Heart left ventricle (tissue), 16 donors: ENCODE measurements at regions of chr15 and their contacts with region 1.

Region 1: DNA sequence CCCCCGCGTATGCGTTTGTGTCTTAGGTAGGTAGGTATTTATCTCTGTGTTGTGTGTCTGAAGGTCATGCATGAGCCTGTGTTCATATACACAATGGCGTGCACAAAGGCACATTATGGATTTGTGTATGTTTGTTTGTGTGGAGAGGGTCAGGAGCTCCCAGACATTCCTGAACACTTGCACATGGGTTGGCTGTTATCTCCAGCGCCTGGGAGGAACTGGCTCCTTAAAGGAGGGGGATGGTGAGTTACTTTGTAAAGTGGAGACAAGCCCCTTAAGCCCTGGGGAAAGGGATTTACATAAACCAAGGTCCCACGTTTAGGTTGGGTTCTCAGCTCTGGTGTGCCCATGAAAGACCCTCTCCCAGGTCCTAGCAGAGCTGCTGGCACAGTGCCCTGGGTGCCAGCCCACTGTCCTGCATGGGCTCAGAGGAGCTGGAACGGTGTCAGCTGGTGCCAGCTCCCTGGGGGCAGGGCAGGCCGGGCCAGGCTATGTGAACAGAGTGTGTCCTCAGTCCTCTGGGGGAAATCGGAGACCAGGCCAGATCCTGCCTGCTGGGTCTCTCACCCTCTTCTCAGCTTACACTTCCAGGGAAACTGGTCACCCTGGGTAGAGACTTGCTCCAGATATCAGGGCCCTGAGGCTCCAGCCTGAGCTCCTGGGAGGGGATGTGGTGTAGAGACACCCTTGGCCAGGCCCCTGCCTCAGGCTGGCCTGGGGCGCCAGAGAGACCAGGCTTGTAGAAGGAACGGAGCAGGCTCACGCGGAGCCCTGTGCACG is 25.1 kb downstream of the SNX33 start:
- DNase-seq: no peak
- ATAC-seq: peak; percentile 24 to 36 (median 30)
- H3K4me3 ChIP-seq: peak overlapping the region in 2 of 12 donors; percentile 1 to 6
- H3K27ac ChIP-seq: peak overlapping the region; percentile 51 to 89 (median 64)
- H3K4me1 ChIP-seq: peaks cover 15 to 65% (median 28%) of the 10 kb centered on the region in 12 donors
- H3K27me3 ChIP-seq: no peaks in the 10 kb centered on the region
- CTCF ChIP-seq: no peak
- POLR2A ChIP-seq: no peak

Region 2: DNA sequence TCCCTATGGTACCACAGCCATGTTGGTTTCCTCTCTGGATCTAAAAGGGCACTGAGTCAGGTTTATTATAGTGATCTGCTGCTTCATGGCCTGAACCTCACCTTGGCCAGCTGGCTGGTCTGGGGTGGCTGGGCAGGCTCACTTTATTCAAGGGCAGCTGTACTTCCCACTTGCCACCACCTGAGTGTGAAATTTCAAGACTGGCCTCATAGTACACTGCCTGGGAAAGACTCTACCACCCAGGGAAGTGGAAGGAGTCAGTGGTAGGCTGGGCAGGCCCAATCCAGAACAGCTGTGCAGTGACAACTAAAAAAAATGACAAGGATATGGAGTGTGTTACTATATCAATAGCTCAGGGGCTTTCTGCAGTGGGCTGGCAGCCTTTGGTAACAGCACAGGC is 56.1 kb before region 1 on chr15:
- intact Hi-C with region 1: loop called in 1 of 10 experiments (anchors 10 kb)
- DNase-seq: no peak
- ATAC-seq: no peak
- H3K4me3 ChIP-seq: no peak overlapping the region
- H3K27ac ChIP-seq: no peak overlapping the region
- H3K4me1 ChIP-seq: peaks cover 0 to 26% (median 16%) of the 10 kb centered on the region in 12 donors
- H3K27me3 ChIP-seq: no peaks in the 10 kb centered on the region
- CTCF ChIP-seq: no peak
- POLR2A ChIP-seq: no peak

Region 3: GRCh38 chr15:75639709-75640482 is 32.9 kb before region 1 on chr15 and contains the start of gene IMP3:
- intact Hi-C with region 1: loop called in 3 of 10 experiments (anchors 5 kb)
- DNase-seq: peak; percentile 95 to 97 (median 95)
- ATAC-seq: peak; percentile 98 to 99 (median 98)
- H3K4me3 ChIP-seq: peak within 1 kb of the TSS; percentile 71 to 99 (median 86)
- H3K27ac ChIP-seq: peak within 1 kb of the TSS; percentile 86 to 99 (median 94)
- H3K4me1 ChIP-seq: peaks cover 9 to 44% (median 30%) of the 10 kb centered on the region in 12 donors
- H3K27me3 ChIP-seq: no peaks in the 10 kb centered on the region
- CTCF ChIP-seq: peak in 1 of 12 donors; percentile 23
- POLR2A ChIP-seq: peak; percentile 82 to 97
- total RNA-seq, gene IMP3: 37.1 to 151 (median 44.5) TPM

Region 4: DNA sequence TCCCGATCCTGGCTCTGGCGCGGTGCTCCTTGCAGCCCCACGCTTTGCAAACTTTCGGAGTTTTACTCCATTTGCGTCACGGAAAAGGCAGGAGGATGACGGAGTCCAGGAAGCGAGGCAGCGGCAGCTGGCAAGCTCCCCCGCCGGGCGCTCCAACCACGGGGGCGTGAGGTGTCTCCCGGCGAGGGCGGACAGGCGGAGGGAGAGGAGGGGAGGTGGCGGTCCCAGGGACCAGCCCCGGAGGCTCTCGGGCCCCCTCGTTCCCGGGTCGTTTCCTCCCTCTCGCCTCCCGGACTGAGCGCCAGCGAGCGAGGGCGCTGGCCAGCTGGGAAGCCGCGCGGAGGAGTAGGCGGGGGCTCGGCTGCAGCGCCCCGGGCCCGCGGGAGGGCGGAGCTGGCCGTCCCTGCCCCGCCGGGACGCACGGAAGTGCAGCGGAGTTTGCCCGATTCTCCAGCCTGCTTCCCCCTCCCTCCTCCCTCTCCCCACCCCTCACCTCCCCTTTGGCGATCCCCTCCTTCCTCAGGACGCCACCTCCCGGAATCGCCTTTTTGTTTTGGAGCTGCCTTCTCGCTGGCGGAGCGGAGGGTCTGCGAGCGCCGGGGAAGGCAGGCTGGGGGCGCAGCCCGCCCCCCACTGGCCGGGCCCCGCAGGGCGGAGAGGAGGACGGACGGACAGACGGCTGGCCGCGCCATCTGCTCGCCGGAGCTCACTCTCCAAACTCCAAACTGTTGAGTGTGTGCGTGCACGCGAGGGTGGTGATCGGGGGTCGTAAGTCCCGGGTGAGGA is 25.3 kb before region 1 on chr15 and contains the start of gene SNX33:
- intact Hi-C with region 1: loop called in 2 of 10 experiments (anchors 1 to 2 kb)
- DNase-seq: peak; percentile 88 to 91 (median 89)
- ATAC-seq: peak; percentile 39 to 86 (median 80)
- H3K4me3 ChIP-seq: peak within 1 kb of the TSS; percentile 63 to 97 (median 86)
- H3K27ac ChIP-seq: peak within 1 kb of the TSS; percentile 83 to 99 (median 96)
- H3K4me1 ChIP-seq: peaks cover 8 to 58% (median 51%) of the 10 kb centered on the region in 12 donors
- H3K27me3 ChIP-seq: no peaks in the 10 kb centered on the region
- CTCF ChIP-seq: peak; percentile 30 to 66 (median 50)
- POLR2A ChIP-seq: peak in 1 of 2 donors; percentile 68
- total RNA-seq, gene SNX33: 8.3 to 20.9 (median 11.6) TPM

Region 5: GRCh38 chr15:75785771-75786574 is 113.1 kb after region 1 on chr15:
- intact Hi-C with region 1: no loop called
- DNase-seq: no peak
- ATAC-seq: no peak
- H3K4me3 ChIP-seq: no peak overlapping the region
- H3K27ac ChIP-seq: no peak overlapping the region
- H3K4me1 ChIP-seq: no peaks in the 10 kb centered on the region
- H3K27me3 ChIP-seq: peaks cover 0 to 16% (median 0%) of the 10 kb centered on the region in 9 donors
- CTCF ChIP-seq: peak in 3 of 12 donors; percentile 8 to 32 (median 29)
- POLR2A ChIP-seq: no peak

Region 6: GRCh38 chr15:75867449-75867848 is 194.6 kb after region 1 on chr15:
- intact Hi-C with region 1: no loop called
- DNase-seq: no peak
- ATAC-seq: no peak
- H3K4me3 ChIP-seq: no peak overlapping the region
- H3K27ac ChIP-seq: no peak overlapping the region
- H3K4me1 ChIP-seq: peaks cover 0 to 17% (median 1%) of the 10 kb centered on the region in 12 donors
- H3K27me3 ChIP-seq: no peaks in the 10 kb centered on the region
- CTCF ChIP-seq: no peak
- POLR2A ChIP-seq: no peak